Prostate gland (tissue), 2 donors: ENCODE measurements at regions of chr20 and their contacts with region 1.

Region 1: GRCh38 chr20:41030531-41031244 is 2.1 kb downstream of the TOP1 start:
- DNase-seq: peak; percentile 28
- H3K4me3 ChIP-seq: peak overlapping the region; percentile 96 to 100
- H3K27ac ChIP-seq: peak overlapping the region in 1 of 2 donors; percentile 87
- H3K4me1 ChIP-seq: peaks cover 8% of the 10 kb centered on the region
- H3K27me3 ChIP-seq: no peaks in the 10 kb centered on the region
- CTCF ChIP-seq: no peak
- POLR2A ChIP-seq: no peak

Region 2: DNA sequence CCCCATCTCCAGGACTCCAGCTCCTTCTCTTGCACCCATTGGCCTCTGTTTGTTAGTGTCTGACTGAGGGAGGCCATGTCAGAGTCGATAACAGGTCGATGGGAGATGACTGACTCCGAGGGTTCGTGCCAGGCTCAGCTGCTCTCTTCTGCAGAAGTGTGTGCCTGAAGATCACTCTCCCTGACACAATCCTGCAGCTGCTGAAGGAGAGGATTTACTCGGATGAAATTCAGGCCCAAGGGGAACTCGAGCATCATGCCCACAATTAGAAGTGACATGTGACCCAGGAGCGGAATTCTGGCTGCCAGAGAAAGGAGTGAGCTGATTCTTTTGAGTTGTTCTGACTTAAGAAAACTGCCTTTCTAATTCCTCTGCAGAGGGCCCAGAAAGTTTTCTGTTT is 659.9 kb before region 1 on chr20:
- intact Hi-C with region 1: no loop called
- DNase-seq: no peak
- H3K4me3 ChIP-seq: no peak overlapping the region
- H3K27ac ChIP-seq: no peak overlapping the region
- H3K4me1 ChIP-seq: no peaks in the 10 kb centered on the region
- H3K27me3 ChIP-seq: no peaks in the 10 kb centered on the region
- CTCF ChIP-seq: no peak
- POLR2A ChIP-seq: no peak

Region 3: DNA sequence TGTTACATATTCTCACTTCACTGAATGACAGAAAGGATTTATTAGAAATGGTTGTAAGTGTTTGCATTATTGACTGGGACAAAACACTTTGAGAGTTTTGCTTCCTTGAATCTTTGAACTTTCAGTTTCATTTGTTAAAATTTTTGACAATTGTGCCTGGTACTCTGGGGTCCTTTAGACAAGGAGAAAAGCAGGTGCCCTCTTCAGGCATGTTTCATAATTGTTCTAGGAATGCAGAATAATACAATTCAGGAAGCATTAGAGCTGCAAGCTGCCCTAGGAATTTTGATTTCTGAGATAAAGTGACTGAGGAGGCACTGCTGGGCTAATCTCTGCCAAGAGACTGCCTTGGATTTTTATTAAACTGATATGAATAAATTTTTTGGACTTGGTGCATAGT is 47.6 kb after region 1 on chr20:
- intact Hi-C with region 1: loop called (anchors 5 kb)
- DNase-seq: peak; percentile 38
- H3K4me3 ChIP-seq: no peak overlapping the region
- H3K27ac ChIP-seq: no peak overlapping the region
- H3K4me1 ChIP-seq: peaks cover 2% of the 10 kb centered on the region
- H3K27me3 ChIP-seq: no peaks in the 10 kb centered on the region
- CTCF ChIP-seq: peak in 3 of 4 experiments; percentile 9 to 67 (median 59)
- POLR2A ChIP-seq: no peak

Region 4: GRCh38 chr20:41245086-41245707 is 214.5 kb after region 1 on chr20:
- intact Hi-C with region 1: no loop called
- DNase-seq: no peak
- H3K4me3 ChIP-seq: no peak overlapping the region
- H3K27ac ChIP-seq: peak overlapping the region; percentile 75 to 79
- H3K4me1 ChIP-seq: peaks cover 3% of the 10 kb centered on the region
- H3K27me3 ChIP-seq: no peaks in the 10 kb centered on the region
- CTCF ChIP-seq: peak in 1 of 4 experiments; percentile 17
- POLR2A ChIP-seq: no peak